Motor neuron (in vitro differentiated cells): ENCODE measurements at regions of chr7 and their contacts with region 1.

Region 1: DNA sequence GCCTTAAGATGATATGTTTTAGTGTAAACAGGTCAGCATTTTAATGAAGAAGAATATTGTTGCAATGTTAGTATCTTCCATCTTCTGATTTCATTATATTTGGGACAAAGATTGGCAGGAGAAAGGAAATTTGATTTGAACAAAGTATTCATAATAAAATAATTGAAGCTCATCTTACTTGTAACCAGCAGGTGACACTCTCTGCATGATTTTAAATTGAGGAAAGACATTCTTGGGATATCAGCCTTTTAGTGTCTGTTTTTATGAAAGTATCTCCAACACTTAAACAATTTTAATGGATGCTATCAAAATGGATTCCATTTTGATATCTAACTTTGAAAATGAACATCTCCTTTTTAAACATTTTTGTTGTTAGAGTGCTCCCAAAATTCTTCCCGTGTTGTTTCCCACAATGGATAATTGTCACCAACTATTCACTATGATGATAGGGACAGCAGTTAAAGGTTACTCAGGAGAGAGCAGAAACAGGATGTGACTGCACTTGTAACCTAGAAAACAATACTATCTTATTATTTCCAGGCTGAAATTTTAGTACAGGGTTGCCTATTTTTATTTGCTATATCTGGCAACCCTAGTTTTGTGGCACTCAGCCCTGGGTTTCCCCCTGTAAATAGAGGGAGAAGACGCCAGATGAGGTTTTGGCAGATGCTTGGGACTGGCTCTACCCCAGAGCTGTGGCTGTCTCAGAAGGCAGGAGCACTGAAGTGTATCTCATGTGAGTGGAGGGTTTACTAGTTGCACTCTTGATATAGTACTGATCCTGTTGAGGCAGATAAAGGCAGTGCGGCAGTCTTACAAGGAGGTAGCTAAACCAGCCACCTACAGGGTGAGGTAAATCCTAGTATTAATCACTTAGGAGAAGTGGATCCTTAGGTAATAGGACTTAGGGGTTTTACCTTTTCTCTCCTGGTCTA is 31.0 kb upstream of the ABCB4 start:
- ATAC-seq: no peak
- H3K4me3 ChIP-seq: no peak overlapping the region
- H3K27ac ChIP-seq: no peak overlapping the region
- H3K4me1 ChIP-seq: peaks cover 10 to 11% of the 10 kb centered on the region in 2 donors

Region 2: GRCh38 chr7:87735371-87735770 is 228.9 kb after region 1 on chr7:
- in situ Hi-C with region 1: no loop called
- ATAC-seq: no peak
- H3K4me3 ChIP-seq: no peak overlapping the region
- H3K27ac ChIP-seq: no peak overlapping the region
- H3K4me1 ChIP-seq: no peaks in the 10 kb centered on the region

Region 3: DNA sequence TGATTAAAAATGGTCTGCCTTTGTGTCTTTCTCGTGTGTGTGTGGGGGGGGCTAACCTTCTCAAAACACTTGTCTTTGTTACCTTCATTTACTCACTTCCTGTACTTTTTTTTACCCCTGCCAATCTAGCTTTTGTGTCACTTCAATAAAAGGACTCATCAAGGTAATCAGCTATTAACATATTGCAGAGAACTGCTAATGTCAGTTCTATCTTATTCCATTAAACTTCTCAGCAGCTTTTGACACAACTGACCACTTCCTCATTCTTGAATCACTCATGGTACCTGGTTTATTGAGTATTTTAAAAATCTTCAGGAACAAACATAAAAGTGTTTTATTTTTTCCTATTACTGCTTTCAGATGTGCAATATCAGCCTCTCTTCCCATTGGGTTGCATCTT is 309.9 kb after region 1 on chr7:
- in situ Hi-C with region 1: no loop called
- ATAC-seq: no peak
- H3K4me3 ChIP-seq: no peak overlapping the region
- H3K27ac ChIP-seq: no peak overlapping the region
- H3K4me1 ChIP-seq: no peaks in the 10 kb centered on the region

Region 4: GRCh38 chr7:87876040-87876868 is 369.7 kb after region 1 on chr7 and contains the starts of genes DBF4 and SLC25A40:
- in situ Hi-C with region 1: loop called in 3 of 9 experiments (anchors 25 kb)
- ATAC-seq: peak; percentile 86 to 95 (median 92)
- H3K4me3 ChIP-seq: peak within 1 kb of the TSS; percentile 68 to 82 (median 75)
- H3K27ac ChIP-seq: peak within 1 kb of the TSS; percentile 78 to 79
- H3K4me1 ChIP-seq: peaks cover 4 to 26% of the 10 kb centered on the region in 2 donors
- total RNA-seq, gene DBF4: 6.4 to 38.1 (median 12.1) TPM
- total RNA-seq, gene SLC25A40: 9.8 to 27.4 (median 14.3) TPM